ENCODE measurements at regions of chr13 and their contacts with region 1.

Region 1: GRCh38 chr13:32031025-32031814 is at the start of gene FRY:
- DNase-seq: peak; percentile 48 to 50
- ATAC-seq: peak; percentile 78
- H3K4me3 ChIP-seq: peak within 1 kb of the TSS; percentile 72 to 88 (median 75)
- H3K27ac ChIP-seq: peak within 1 kb of the TSS; percentile 65 to 72 (median 70)
- H3K4me1 ChIP-seq: peaks cover 5 to 7% of the 10 kb centered on the region in 2 donors
- H3K27me3 ChIP-seq: no peaks in the 10 kb centered on the region
- CTCF ChIP-seq: peak in 1 of 5 experiments; percentile 28
- POLR2A ChIP-seq: peak; percentile 27 to 51
- total RNA-seq, gene FRY: 10.1 to 48.3 (median 21.4) TPM

Region 2: DNA sequence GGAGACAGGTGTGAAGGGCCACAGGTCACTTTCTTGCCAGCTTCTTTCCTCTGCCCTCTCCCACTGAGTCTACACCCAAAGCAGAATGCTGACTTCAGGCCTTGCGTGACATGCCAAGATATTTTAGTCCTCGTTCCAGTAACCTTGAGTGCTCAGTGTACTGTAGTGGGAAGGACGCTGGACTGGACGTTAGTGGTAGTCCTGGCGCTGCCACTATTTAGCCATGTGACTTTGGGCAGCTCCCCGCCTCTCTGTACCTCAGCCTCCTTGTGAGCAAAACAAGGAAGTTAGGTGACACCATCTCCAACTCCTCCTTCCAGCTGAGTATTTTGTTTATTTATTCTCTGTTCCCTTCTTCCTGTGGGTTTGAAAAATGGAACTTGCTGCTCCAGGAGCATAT is 86.5 kb after region 1 on chr13:
- in situ Hi-C with region 1: no loop called
- intact Hi-C with region 1: loop called (anchors 5 kb)
- DNase-seq: peak; percentile 80 to 91
- ATAC-seq: peak; percentile 99
- H3K4me3 ChIP-seq: peak overlapping the region in 1 of 4 donors; percentile 14
- H3K27ac ChIP-seq: peak overlapping the region; percentile 76 to 82 (median 80)
- H3K4me1 ChIP-seq: peaks cover 9 to 42% of the 10 kb centered on the region in 2 donors
- H3K27me3 ChIP-seq: no peaks in the 10 kb centered on the region
- CTCF ChIP-seq: no peak
- POLR2A ChIP-seq: peak in 1 of 2 donors; percentile 29

Region 3: DNA sequence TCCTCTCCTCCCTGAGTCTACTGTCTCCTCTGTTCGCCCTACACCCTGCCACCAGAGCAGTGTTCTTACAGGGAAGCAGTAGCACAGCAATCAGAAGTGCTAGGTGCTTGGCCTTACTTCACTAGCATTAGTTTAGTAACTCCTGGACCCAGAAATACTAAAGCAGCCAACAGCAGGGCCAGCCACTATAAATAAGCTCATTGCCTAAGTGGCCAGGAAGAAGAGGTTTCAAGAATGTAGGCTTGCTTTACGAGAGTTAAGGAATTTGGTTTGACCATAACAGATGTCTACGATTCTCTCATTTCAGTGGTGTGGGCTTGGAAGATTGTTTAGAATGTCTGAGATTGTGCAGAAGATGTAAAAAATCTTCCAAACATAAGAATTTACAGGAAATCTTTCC is 180.6 kb after region 1 on chr13:
- in situ Hi-C with region 1: no loop called
- intact Hi-C with region 1: loop called (anchors 5 kb)
- DNase-seq: peak in 1 of 2 donors; percentile 24
- ATAC-seq: peak; percentile 58 to 77
- H3K4me3 ChIP-seq: no peak overlapping the region
- H3K27ac ChIP-seq: no peak overlapping the region
- H3K4me1 ChIP-seq: peaks cover 2 to 15% of the 10 kb centered on the region in 2 donors
- H3K27me3 ChIP-seq: no peaks in the 10 kb centered on the region
- CTCF ChIP-seq: no peak
- POLR2A ChIP-seq: no peak

Measured in gastrocnemius medialis (tissue), 4 donors.